Right ventricle myocardium inferior (tissue), 1 donor: ENCODE measurements at regions of chr12 and their contacts with region 1.

Region 1: GRCh38 chr12:62372137-62372536 is 94.5 kb upstream of the MON2 start:
- DNase-seq: no peak
- ATAC-seq: no peak

Region 2: GRCh38 chr12:62259993-62260732 is 112.0 kb before region 1 on chr12 and contains the start of gene USP15:
- intact Hi-C with region 1: loop called (anchors 5 kb)
- DNase-seq: peak; percentile 98
- ATAC-seq: peak; percentile 98
- total RNA-seq, gene USP15: 50.7 TPM

Region 3: DNA sequence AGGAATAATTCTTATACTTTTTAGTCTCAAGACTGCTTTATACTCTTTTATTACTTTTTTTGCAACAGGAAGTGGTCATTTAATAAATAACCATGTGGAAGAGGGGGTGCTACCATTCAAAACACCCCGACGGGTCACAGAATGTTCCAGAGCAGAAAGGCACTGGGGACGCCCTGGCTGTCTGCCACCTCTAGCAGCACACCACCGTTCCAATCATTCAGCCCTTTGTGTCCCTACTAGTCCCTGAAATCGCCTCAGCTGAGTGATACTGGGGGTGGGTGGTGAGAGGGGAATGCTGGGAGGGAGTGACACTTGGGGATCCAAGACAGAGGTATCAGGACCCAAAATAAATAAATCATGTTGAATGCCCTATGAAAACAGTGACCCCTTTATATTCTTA is 146.9 kb after region 1 on chr12:
- intact Hi-C with region 1: no loop called
- DNase-seq: peak; percentile 63
- ATAC-seq: peak; percentile 80